Dendritic cell treated with granulocyte-macrophage colony-stimulating factor and Interleukin-4, amounts not matched to agents 40 ng/mL and 50 ng/mL, for 4 days (primary cell): ENCODE measurements at regions of chr6 and their contacts with region 1.

Region 1: GRCh38 chr6:32622545-32623401 is 14.4 kb upstream of the HLA-DQA1 start:
- H3K4me3 Mint-ChIP-seq: peak overlapping the region; percentile 57
- H3K27ac Mint-ChIP-seq: peak overlapping the region; percentile 97
- H3K4me1 Mint-ChIP-seq: peaks cover 23% of the 10 kb centered on the region
- H3K27me3 Mint-ChIP-seq: peaks cover 1% of the 10 kb centered on the region

Region 2: DNA sequence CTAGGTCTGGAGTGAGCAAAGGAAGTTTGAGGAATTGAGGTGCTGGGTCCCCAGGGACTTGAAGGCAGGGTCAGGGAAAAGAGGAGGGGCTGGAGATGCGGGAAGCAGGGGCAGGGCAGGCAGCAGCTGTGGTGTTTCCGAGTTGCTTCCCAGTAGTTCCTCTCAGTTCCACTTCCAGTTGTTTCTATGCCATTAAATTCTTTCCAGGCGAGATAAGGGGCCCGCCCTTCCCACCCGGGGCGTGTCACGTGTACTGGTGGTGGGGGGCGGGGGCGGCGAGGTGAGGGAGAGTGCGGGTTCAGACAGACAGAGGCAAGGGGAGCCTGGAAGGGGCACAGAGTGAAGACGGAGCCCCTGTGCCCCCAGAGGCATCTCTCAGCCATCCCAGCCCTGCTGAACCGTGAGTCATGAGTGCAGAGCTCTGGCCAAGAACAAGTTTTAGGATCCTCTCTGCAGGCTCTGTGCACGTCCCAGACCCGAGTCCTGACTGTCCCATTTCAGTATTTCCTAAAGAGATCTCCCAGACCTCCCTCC is 514.6 kb before region 1 on chr6:
- intact Hi-C with region 1: no loop called
- H3K4me3 Mint-ChIP-seq: no peak overlapping the region
- H3K27ac Mint-ChIP-seq: peak overlapping the region; percentile 47
- H3K4me1 Mint-ChIP-seq: peaks cover 41% of the 10 kb centered on the region
- H3K27me3 Mint-ChIP-seq: peaks cover 63% of the 10 kb centered on the region

Region 3: DNA sequence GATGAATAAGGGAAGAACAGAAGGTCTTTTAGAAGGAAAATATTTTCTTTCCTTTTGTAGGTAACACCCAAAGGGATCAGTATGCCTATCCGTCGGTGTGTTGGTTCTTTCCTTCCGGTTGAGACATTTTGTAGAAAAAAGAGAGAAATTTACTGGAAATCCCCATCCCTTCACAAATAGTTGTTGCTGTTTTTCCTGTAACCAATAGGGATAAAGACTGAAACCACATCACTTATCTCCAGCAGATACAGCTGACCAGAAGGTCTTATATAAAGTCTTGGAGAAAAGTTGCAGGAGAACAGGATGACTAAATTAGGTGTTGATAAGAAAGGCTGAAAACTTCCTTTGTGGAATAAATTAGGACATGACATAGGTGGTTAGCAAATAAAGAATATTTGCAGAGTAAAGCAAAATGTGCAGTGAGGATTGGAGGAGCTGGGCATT is 18.3 kb before region 1 on chr6:
- intact Hi-C with region 1: loop called (anchors 2 kb)
- H3K4me3 Mint-ChIP-seq: peak overlapping the region; percentile 57
- H3K27ac Mint-ChIP-seq: no peak overlapping the region
- H3K4me1 Mint-ChIP-seq: peaks cover 59% of the 10 kb centered on the region
- H3K27me3 Mint-ChIP-seq: no peaks in the 10 kb centered on the region

Region 4: GRCh38 chr6:32609731-32610640 is 12.8 kb before region 1 on chr6:
- intact Hi-C with region 1: loop called (anchors 1 kb)
- H3K4me3 Mint-ChIP-seq: no peak overlapping the region
- H3K27ac Mint-ChIP-seq: no peak overlapping the region
- H3K4me1 Mint-ChIP-seq: peaks cover 33% of the 10 kb centered on the region
- H3K27me3 Mint-ChIP-seq: no peaks in the 10 kb centered on the region

Region 5: DNA sequence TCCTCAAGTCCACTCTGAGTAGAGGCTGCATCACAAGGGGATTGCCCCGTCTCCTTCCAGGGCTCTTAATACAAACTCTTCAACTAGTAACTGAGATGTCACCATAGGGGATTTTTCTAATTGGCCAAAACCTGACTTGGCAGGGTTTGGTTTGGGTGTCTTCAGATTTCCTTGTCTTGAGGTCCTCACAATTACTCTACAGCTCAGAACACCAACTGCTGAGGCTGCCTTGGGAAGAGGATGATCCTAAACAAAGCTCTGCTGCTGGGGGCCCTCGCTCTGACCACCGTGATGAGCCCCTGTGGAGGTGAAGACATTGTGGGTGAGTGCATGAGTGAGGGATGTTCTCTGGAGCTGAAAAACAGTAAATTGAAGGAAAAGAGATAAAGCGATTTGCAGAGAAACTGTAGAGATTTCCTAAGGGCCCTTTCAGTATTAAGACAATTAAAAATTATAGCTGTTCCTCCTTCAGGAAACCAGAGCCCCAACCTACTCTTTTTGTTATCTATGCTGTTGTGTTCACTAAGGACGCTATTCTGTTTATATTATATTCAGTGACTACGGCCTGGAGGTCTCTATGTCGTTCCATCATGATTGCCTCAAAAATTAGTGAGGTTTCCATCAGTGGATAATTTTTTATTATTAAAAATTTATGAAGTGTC is 14.6 kb after region 1 on chr6 and contains the start of gene HLA-DQA1:
- intact Hi-C with region 1: loop called (anchors 2 kb)
- H3K4me3 Mint-ChIP-seq: peak within 1 kb of the TSS; percentile 99
- H3K27ac Mint-ChIP-seq: peak within 1 kb of the TSS; percentile 99
- H3K4me1 Mint-ChIP-seq: peaks cover 67% of the 10 kb centered on the region
- H3K27me3 Mint-ChIP-seq: no peaks in the 10 kb centered on the region